Dendritic cell treated with granulocyte-macrophage colony-stimulating factor and Interleukin-4, amounts not matched to agents 40 ng/mL and 50 ng/mL, for 4 days (primary cell): ENCODE measurements at regions of chr12 and their contacts with region 1.

Region 1: GRCh38 chr12:21296751-21297406 is 37.8 kb downstream of the SLCO1A2 start:
- H3K4me3 Mint-ChIP-seq: no peak overlapping the region
- H3K27ac Mint-ChIP-seq: no peak overlapping the region
- H3K4me1 Mint-ChIP-seq: peaks cover 13% of the 10 kb centered on the region
- H3K27me3 Mint-ChIP-seq: no peaks in the 10 kb centered on the region

Region 2: GRCh38 chr12:21438643-21439042 is 141.8 kb after region 1 on chr12:
- intact Hi-C with region 1: loop called (anchors 5 kb)
- H3K4me3 Mint-ChIP-seq: peak overlapping the region; percentile 95
- H3K27ac Mint-ChIP-seq: peak overlapping the region; percentile 96
- H3K4me1 Mint-ChIP-seq: peaks cover 31% of the 10 kb centered on the region
- H3K27me3 Mint-ChIP-seq: peaks cover 16% of the 10 kb centered on the region

Region 3: GRCh38 chr12:21451529-21451928 is 154.7 kb after region 1 on chr12:
- intact Hi-C with region 1: loop called (anchors 5 kb)
- H3K4me3 Mint-ChIP-seq: no peak overlapping the region
- H3K27ac Mint-ChIP-seq: no peak overlapping the region
- H3K4me1 Mint-ChIP-seq: no peaks in the 10 kb centered on the region
- H3K27me3 Mint-ChIP-seq: no peaks in the 10 kb centered on the region

Region 4: DNA sequence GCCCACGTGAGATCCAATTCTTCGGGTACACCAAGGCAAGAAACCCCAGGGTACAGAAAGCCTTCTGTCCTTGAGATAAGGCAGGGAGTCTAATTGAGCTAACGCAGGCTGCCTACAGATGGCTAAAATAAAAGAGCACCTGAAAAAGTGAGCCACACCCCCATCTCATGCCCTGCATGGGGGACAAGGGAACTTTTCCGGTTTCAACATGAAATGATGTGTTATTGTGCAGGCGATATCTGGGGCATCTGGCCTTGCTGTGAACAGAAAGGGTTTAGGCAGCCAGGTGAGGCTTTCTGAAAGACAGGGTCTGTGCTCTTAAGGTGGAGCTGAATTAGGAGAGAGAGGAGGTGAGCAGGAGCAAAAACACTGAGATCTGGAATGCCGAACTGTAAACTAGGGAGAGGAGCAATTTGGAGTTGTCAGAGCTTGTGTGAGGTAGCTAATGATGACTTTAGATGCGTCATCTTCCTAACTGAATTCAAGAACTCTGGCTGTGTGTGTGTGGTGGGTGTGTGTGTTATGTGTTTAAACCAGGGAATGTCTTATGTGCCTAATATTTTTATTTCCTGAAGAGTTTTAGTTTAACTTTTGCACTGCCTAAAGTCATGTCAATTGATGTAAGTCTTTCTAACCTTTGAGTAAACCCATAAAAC is 380.9 kb after region 1 on chr12:
- intact Hi-C with region 1: loop called (anchors 5 kb)
- H3K4me3 Mint-ChIP-seq: no peak overlapping the region
- H3K27ac Mint-ChIP-seq: no peak overlapping the region
- H3K4me1 Mint-ChIP-seq: no peaks in the 10 kb centered on the region
- H3K27me3 Mint-ChIP-seq: no peaks in the 10 kb centered on the region